ENCODE measurements at regions of chr1 and their contacts with region 1.

Region 1: GRCh38 chr1:147723691-147724323 is 36.6 kb downstream of the GJA5 start:
- DNase-seq: peak; percentile 15
- H3K4me3 ChIP-seq: no peak overlapping the region
- H3K27ac ChIP-seq: no peak overlapping the region
- H3K4me1 ChIP-seq: peaks cover 12% of the 10 kb centered on the region
- H3K27me3 ChIP-seq: no peaks in the 10 kb centered on the region
- CTCF ChIP-seq: peak; percentile 30 to 62

Region 2: GRCh38 chr1:147676290-147677053 is 47.3 kb before region 1 on chr1:
- CTCF ChIA-PET with region 1: no interaction called
- dilution Hi-C with region 1: loop called (anchors 5 kb)
- in situ Hi-C with region 1: no loop called
- intact Hi-C with region 1: no loop called
- DNase-seq: peak; percentile 74
- H3K4me3 ChIP-seq: no peak overlapping the region
- H3K27ac ChIP-seq: peak overlapping the region; percentile 56
- H3K4me1 ChIP-seq: peaks cover 19% of the 10 kb centered on the region
- H3K27me3 ChIP-seq: no peaks in the 10 kb centered on the region
- CTCF ChIP-seq: no peak

Region 3: GRCh38 chr1:147800804-147801203 is 77.0 kb after region 1 on chr1:
- CTCF ChIA-PET with region 1: no interaction called
- dilution Hi-C with region 1: loop called (anchors 5 kb)
- in situ Hi-C with region 1: no loop called
- intact Hi-C with region 1: no loop called
- DNase-seq: peak; percentile 21
- H3K4me3 ChIP-seq: no peak overlapping the region
- H3K27ac ChIP-seq: no peak overlapping the region
- H3K4me1 ChIP-seq: no peaks in the 10 kb centered on the region
- H3K27me3 ChIP-seq: no peaks in the 10 kb centered on the region
- CTCF ChIP-seq: no peak